Activated CD8-positive, alpha-beta memory T cell treated with anti-CD3 and anti-CD28 coated beads, Interleukin-2, amount 10 ng/mL, durations not matched to agents 7 days and 5 days (primary cell): ENCODE measurements at regions of chr18 and their contacts with region 1.

Region 1: DNA sequence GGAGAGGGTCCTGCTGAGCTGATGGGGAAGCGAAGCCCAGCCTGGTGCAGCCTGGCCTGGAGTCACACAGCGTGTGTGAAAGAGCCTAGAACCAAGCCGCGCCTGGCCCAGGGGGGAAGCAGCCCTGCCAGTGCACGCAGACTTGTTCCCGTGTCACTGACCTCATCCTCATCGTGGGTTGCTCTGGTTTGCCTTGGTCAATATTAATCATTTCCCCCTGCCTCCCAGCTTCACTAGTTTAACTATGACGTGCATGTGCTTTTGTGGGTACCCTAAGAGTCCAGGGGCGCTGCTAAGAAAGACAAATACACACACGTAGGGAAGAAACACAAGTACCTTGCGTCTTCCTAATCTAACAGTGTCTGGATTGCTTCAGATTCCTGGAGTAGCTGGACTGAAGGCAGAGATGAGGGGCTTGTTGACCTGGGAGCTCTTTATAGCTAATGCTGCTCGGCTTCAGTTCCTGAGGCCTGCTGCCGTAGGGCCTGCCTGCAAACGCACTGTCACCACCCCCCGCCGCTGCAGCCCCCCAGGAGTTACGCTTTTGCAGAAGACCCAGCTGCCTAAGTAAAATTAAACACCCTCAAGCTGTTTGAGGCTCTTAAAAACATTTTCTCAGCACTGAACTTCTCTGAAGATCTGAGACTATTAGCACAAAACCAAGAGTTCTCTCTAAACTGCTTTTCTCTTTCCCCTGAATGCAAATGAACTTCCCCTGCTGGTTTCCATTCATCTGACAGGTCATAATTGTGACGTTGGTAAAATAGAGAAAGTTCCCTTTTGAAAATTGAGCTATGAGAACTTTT is 159.2 kb downstream of the FAM210A start:
- DNase-seq: peak; percentile 81
- ATAC-seq: peak; percentile 58
- H3K4me3 Mint-ChIP-seq: peak overlapping the region; percentile 67
- H3K27ac Mint-ChIP-seq: peak overlapping the region; percentile 99
- H3K4me1 Mint-ChIP-seq: peaks cover 84% of the 10 kb centered on the region
- H3K27me3 Mint-ChIP-seq: no peaks in the 10 kb centered on the region

Region 2: GRCh38 chr18:13520306-13520705 is 46.8 kb before region 1 on chr18:
- CTCF ChIA-PET with region 1: no interaction called
- DNase-seq: no peak
- ATAC-seq: no peak
- H3K4me3 Mint-ChIP-seq: no peak overlapping the region
- H3K27ac Mint-ChIP-seq: no peak overlapping the region
- H3K4me1 Mint-ChIP-seq: no peaks in the 10 kb centered on the region
- H3K27me3 Mint-ChIP-seq: no peaks in the 10 kb centered on the region

Region 3: DNA sequence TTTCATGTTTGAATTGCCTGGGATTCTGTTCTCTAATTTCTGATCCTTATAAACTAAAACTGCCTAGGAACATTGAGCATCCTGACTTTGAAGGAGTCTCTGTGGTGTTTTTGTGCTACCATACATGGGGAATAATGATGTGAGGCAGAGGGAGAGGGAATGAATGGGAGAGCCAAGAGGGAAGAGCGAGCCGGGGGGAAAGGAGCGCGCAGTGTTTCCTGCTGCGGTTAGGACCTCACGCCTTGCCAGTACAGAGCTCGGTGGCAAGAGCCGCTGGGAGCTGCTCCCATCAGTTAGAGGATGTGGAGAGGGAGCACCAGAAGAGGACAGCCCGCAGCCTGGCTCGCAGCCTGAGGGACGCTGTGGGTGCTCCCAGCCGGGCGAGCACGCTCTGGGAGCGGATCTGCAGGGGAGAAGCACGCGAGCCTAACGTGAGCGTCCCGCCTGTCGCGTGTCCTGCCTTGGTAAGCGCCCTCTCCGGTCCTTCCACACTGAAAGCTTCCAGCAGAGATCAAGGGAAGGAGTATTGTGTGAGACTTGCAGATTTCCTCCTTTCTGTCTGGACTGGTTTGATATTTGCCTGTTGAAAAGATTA is 44.6 kb after region 1 on chr18:
- CTCF ChIA-PET with region 1: interaction called, 122 read pairs
- DNase-seq: peak; percentile 63
- ATAC-seq: peak; percentile 6
- H3K4me3 Mint-ChIP-seq: peak overlapping the region; percentile 77
- H3K27ac Mint-ChIP-seq: peak overlapping the region; percentile 99
- H3K4me1 Mint-ChIP-seq: peaks cover 91% of the 10 kb centered on the region
- H3K27me3 Mint-ChIP-seq: no peaks in the 10 kb centered on the region